PC-3 (cell line): ENCODE measurements at regions of chr5 and their contacts with region 1.

Region 1: DNA sequence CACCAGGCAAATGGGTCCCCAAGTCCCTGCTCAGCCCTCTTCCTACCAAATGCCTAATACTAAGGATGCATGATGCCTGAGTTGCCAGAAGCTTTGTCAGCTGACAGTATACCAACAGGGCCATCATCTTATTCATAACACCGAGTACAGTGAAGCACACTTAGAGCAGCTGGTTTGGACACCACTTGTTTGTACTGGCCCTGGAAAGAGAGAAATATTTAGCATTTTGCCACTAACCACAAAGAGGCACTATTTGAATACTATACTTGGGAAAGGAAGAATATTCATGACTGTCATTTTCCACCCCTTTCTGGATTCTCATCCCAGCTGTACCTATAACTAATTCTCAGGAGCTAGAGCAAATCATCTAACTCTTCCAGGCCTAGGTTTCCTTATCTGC is 364.4 kb upstream of the KIF2A start:
- DNase-seq: no peak
- ATAC-seq: no peak
- H3K4me3 ChIP-seq: no peak overlapping the region
- H3K27ac ChIP-seq: no peak overlapping the region
- H3K4me1 ChIP-seq: no peaks in the 10 kb centered on the region
- H3K27me3 ChIP-seq: peaks cover 19% of the 10 kb centered on the region
- CTCF ChIP-seq: no peak

Region 2: DNA sequence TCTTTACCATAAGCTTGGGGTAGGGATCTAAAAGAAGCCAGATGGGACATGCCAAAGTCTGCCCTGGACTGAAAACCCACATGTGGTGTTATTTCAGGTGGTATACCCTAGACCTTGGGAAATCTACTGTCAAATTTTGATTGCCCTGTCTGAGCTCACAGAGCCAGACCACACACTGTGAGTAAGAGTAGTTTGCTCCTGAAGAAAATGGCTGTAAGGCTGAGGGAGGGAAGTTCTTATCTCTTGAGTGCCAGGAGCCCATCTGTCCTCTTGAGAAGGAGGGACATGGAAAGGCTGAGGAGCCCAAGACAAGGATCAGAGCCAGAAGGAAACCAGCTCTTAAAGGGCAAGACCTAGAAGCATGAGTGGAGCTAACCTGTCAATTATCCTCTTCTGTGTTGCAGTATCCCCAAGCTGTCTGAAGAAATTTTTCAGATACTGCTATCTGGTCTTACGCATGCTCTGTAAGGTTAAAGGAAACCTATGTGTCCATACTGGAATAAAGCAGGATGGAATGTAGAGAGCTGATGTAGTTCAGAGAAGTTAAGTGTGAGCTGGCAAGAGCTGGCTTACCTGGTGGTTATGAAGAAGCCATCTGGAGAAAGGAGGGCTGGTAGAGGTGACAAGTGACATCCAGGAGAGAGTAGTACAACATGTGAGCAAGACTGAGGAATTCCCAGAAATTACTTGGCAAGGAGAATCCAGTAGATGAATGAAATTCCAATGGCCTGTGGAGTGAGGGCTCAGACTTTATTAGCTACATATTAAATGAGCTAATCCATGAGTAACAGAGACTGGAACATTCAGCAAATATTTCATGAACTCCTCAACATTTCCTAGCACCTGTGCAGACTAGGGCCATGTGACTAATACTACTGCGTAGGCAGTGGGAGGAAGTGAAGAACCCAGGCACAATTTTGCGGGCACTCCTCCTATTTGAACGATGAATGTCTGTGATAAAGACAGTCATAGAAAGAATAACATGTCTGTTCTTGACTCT is 24.7 kb before region 1 on chr5:
- CTCF ChIA-PET with region 1: no interaction called
- POLR2A ChIA-PET with region 1: no interaction called
- intact Hi-C with region 1: no loop called
- DNase-seq: peak; percentile 87
- ATAC-seq: peak; percentile 60
- H3K4me3 ChIP-seq: no peak overlapping the region
- H3K27ac ChIP-seq: peak overlapping the region; percentile 78
- H3K4me1 ChIP-seq: peaks cover 31% of the 10 kb centered on the region
- H3K27me3 ChIP-seq: no peaks in the 10 kb centered on the region
- CTCF ChIP-seq: no peak

Region 3: GRCh38 chr5:62143268-62144229 is 201.9 kb after region 1 on chr5:
- CTCF ChIA-PET with region 1: no interaction called
- POLR2A ChIA-PET with region 1: no interaction called
- intact Hi-C with region 1: loop called (anchors 10 kb)
- DNase-seq: peak; percentile 54
- ATAC-seq: peak; percentile 61; the same call in 1 of the 2 replicates
- H3K4me3 ChIP-seq: no peak overlapping the region
- H3K27ac ChIP-seq: no peak overlapping the region
- H3K4me1 ChIP-seq: peaks cover 13% of the 10 kb centered on the region
- H3K27me3 ChIP-seq: no peaks in the 10 kb centered on the region
- CTCF ChIP-seq: peak; percentile 70

Region 4: DNA sequence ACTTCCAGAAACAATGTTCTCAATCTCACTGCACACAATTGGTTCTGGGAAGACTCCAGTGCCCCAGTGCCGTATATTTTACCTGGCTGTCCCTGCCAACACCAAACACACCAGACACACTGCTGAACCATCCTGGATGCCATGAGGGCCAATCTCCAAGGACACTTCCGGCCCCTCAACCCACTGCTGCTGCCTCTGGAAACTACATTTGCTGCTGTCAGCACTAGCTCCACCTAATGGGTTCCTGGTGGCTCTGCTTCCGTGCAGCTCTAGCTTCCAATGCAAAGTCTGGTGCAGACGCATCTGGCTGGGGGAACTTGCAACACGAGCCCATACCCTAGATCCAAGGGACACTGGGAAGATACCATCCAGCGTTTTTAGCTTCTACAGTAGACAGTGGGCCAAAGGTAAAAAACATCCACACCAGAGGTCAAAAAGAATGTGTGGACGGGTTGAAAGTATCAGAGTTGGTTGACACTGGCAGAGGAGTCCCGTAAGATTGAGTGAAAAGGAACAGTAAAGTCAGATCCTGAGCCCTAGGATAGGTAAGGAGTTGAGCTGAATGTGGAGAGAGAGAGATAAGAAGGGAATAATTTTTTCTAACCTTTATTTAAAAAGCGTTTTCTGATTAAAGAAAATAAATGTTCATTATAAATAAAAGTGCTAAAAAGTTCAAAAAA is 264.7 kb after region 1 on chr5:
- CTCF ChIA-PET with region 1: no interaction called
- POLR2A ChIA-PET with region 1: no interaction called
- intact Hi-C with region 1: no loop called
- DNase-seq: peak; percentile 17
- ATAC-seq: peak; percentile 55; the same call in 1 of the 2 replicates
- H3K4me3 ChIP-seq: no peak overlapping the region
- H3K27ac ChIP-seq: no peak overlapping the region
- H3K4me1 ChIP-seq: no peaks in the 10 kb centered on the region
- H3K27me3 ChIP-seq: peaks cover 16% of the 10 kb centered on the region; the same call in 1 of the 2 replicates
- CTCF ChIP-seq: peak; percentile 41